ENCODE measurements at regions of chr3 and their contacts with region 1.

Region 1: GRCh38 chr3:184513276-184514170 is 48.1 kb upstream of the EPHB3 start:
- DNase-seq: peak; percentile 7
- ATAC-seq: peak; percentile 100
- H3K4me3 ChIP-seq: no peak overlapping the region
- H3K27ac ChIP-seq: no peak overlapping the region
- H3K4me1 ChIP-seq: no peaks in the 10 kb centered on the region
- H3K27me3 ChIP-seq: peaks cover 2 to 12% of the 10 kb centered on the region in 2 experiments
- CTCF ChIP-seq: peak; percentile 86 to 90 (median 90)
- EP300 ChIP-seq: no peak
- POLR2A ChIP-seq: no peak
- RAD21 ChIP-seq: peak; percentile 78

Region 2: GRCh38 chr3:184362668-184363540 is 150.6 kb before region 1 on chr3:
- CTCF ChIA-PET with region 1: interaction called, 10 read pairs
- POLR2A ChIA-PET with region 1: no interaction called
- RAD21 ChIA-PET with region 1: no interaction called
- SMC1A ChIA-PET with region 1: no interaction called
- in situ Hi-C with region 1: no loop called
- intact Hi-C with region 1: no loop called
- DNase-seq: peak; percentile 94
- ATAC-seq: peak; percentile 90
- H3K4me3 ChIP-seq: peak overlapping the region; percentile 67
- H3K27ac ChIP-seq: peak overlapping the region; percentile 87
- H3K4me1 ChIP-seq: peaks cover 10% of the 10 kb centered on the region
- H3K27me3 ChIP-seq: no peaks in the 10 kb centered on the region; a peak in 1 of 4 replicates
- CTCF ChIP-seq: peak; percentile 53 to 80 (median 60)
- EP300 ChIP-seq: no peak
- POLR2A ChIP-seq: peak; percentile 91
- RAD21 ChIP-seq: no peak

Region 3: DNA sequence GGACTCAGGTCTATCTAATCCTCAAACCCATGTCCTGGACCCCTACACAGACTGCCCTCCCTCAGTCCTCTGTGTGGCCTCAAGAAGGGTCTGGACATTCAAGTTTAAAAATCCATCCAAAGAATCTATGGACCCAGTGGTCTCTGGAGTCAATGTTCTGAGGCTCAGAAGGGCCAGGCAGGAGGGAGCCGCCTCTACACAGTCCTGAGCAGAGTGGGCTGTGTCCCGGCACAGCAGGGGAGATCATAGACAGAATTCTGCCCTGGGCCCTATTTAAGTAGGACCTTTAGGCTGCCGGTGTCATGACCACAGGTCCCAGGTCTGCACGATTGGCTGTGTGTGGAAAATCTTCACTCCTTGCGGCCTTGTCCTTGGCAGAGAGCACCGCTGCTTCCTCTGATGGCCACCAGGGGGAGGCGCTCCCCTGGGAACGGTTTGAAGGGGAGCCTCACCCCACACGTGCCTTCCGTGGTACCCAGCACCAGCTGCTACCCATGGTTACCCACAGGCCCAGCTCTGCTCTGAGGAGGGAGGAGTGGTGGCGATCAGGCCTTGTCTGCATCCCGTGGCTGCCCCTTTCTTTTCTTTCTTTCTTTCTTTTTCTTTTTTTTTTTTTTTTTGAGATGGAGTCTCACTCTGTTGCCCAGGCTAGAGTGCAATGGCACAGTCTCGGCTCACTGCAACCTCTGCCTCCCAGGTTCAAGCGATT is 95.8 kb before region 1 on chr3:
- CTCF ChIA-PET with region 1: interaction called, 6 read pairs
- POLR2A ChIA-PET with region 1: no interaction called
- RAD21 ChIA-PET with region 1: interaction called, 10 read pairs
- SMC1A ChIA-PET with region 1: interaction called, 3 read pairs
- in situ Hi-C with region 1: no loop called
- intact Hi-C with region 1: loop called (anchors 1 kb)
- DNase-seq: peak; percentile 8
- ATAC-seq: peak; percentile 100
- H3K4me3 ChIP-seq: no peak overlapping the region
- H3K27ac ChIP-seq: no peak overlapping the region
- H3K4me1 ChIP-seq: no peaks in the 10 kb centered on the region
- H3K27me3 ChIP-seq: no peaks in the 10 kb centered on the region
- CTCF ChIP-seq: peak; percentile 88 to 95 (median 90)
- EP300 ChIP-seq: no peak
- POLR2A ChIP-seq: no peak
- RAD21 ChIP-seq: peak; percentile 77

Region 4: DNA sequence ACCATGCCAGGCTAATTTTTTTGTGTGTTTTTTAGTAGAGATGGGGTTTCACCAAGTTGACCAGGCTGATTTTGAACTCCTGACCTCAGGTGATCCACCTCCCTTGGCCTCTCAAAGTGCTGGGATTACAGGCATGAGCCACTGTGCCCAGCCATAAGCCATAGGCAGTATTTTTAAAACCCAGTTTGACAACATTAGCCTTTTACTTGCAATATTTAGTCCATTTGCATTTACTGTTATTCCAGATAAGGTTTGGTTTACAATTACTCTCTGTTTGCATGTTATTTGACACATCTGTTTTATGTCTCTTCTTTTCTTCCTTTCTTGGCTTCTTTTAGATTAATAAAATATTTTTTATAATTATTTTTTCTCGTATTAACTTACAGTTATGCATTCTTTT is 35.6 kb before region 1 on chr3:
- CTCF ChIA-PET with region 1: interaction called, 10 read pairs
- POLR2A ChIA-PET with region 1: no interaction called
- RAD21 ChIA-PET with region 1: interaction called, 3 read pairs
- SMC1A ChIA-PET with region 1: interaction called, 4 read pairs
- in situ Hi-C with region 1: no loop called
- intact Hi-C with region 1: no loop called
- DNase-seq: no peak
- ATAC-seq: no peak
- H3K4me3 ChIP-seq: no peak overlapping the region
- H3K27ac ChIP-seq: no peak overlapping the region
- H3K4me1 ChIP-seq: no peaks in the 10 kb centered on the region
- H3K27me3 ChIP-seq: peaks cover 0 to 6% of the 10 kb centered on the region in 2 experiments; a peak in 3 of 4 replicates
- CTCF ChIP-seq: no peak
- EP300 ChIP-seq: no peak
- POLR2A ChIP-seq: no peak
- RAD21 ChIP-seq: no peak